ENCODE measurements at regions of chr3 and their contacts with region 1.

Region 1: DNA sequence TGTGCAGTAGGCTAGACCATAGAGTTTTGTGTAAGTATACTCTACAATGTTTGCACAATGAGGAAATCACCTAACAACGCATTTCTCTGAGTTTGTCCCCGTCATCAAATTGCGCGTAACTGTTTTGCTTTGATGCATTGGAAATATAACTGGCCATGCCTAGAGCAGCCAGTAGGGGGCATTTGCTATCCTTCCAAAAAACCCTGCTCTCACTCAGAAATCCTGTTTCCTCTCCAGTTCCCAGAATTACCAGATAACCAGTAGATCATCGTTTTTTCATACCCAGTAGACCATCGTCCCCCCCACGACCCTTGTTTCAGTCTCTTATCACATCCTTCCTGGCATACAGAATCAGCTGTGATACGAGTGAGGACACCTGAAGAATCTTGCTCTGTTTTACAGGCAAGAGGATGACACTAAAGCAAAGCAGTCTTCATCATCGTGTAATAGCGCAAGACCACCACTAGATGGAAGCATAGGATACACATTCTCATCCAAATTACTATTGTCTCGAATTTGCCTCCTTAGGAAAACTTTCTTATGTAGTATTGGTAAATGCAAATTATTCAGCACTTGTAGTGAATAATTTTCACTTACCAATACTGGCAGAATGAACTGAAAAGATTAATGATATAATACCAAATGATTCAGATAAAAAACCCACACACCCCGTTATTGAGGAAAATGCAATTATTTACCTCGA is 4.4 kb upstream of the GABRR3 start:
- DNase-seq: peak; percentile 80
- H3K4me3 ChIP-seq: peak overlapping the region; percentile 47 to 52 (median 50)
- H3K27ac ChIP-seq: no peak overlapping the region
- H3K4me1 ChIP-seq: peaks cover 6% of the 10 kb centered on the region
- H3K27me3 ChIP-seq: no peaks in the 10 kb centered on the region
- CTCF ChIP-seq: peak; percentile 74 to 82

Region 2: GRCh38 chr3:98329392-98330124 is 290.1 kb after region 1 on chr3:
- CTCF ChIA-PET with region 1: no interaction called
- dilution Hi-C with region 1: no loop called
- in situ Hi-C with region 1: loop called (anchors 5 to 10 kb)
- intact Hi-C with region 1: loop called (anchors 1 kb)
- DNase-seq: peak; percentile 38
- H3K4me3 ChIP-seq: no peak overlapping the region
- H3K27ac ChIP-seq: no peak overlapping the region
- H3K4me1 ChIP-seq: no peaks in the 10 kb centered on the region
- H3K27me3 ChIP-seq: no peaks in the 10 kb centered on the region
- CTCF ChIP-seq: peak; percentile 69 to 83

Region 3: DNA sequence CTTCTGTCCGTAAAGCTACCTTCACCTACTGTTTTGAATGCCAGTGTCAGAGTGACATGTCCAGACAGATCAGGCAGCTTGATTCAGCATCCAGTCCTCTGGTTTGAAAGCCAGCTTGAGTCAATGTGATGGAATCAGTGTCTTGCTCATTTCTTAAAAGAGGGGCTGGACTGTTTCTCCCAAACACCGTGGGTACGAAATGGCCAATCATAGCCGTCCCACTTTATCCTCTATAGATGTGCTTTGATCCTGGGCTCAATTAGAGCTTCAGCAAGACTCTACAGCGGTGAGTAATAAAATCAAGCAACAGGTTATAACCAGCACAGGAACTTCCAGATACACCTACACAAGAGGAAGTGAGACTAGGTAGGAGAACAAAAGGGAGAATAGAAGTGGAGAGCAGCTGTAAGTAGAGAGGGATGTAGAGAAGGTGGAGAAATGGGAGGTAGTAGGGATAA is 406.5 kb after region 1 on chr3:
- CTCF ChIA-PET with region 1: no interaction called
- dilution Hi-C with region 1: no loop called
- in situ Hi-C with region 1: no loop called
- intact Hi-C with region 1: loop called (anchors 5 kb)
- DNase-seq: peak; percentile 99
- H3K4me3 ChIP-seq: peak overlapping the region; percentile 7 to 45 (median 22)
- H3K27ac ChIP-seq: peak overlapping the region; percentile 67
- H3K4me1 ChIP-seq: peaks cover 18% of the 10 kb centered on the region
- H3K27me3 ChIP-seq: no peaks in the 10 kb centered on the region
- CTCF ChIP-seq: no peak

Region 4: GRCh38 chr3:98573181-98573728 is 533.8 kb after region 1 on chr3:
- CTCF ChIA-PET with region 1: no interaction called
- dilution Hi-C with region 1: no loop called
- in situ Hi-C with region 1: loop called (anchors 25 kb)
- intact Hi-C with region 1: loop called (anchors 1 kb)
- DNase-seq: peak; percentile 19
- H3K4me3 ChIP-seq: no peak overlapping the region
- H3K27ac ChIP-seq: no peak overlapping the region
- H3K4me1 ChIP-seq: peaks cover 15% of the 10 kb centered on the region
- H3K27me3 ChIP-seq: no peaks in the 10 kb centered on the region
- CTCF ChIP-seq: peak; percentile 44 to 59

Region 5: GRCh38 chr3:98801043-98801747 is 761.7 kb after region 1 on chr3:
- CTCF ChIA-PET with region 1: no interaction called
- dilution Hi-C with region 1: no loop called
- in situ Hi-C with region 1: loop called in 1 of 2 experiments (anchors 25 kb)
- intact Hi-C with region 1: loop called (anchors 5 kb)
- DNase-seq: no peak
- H3K4me3 ChIP-seq: no peak overlapping the region
- H3K27ac ChIP-seq: no peak overlapping the region
- H3K4me1 ChIP-seq: peaks cover 30% of the 10 kb centered on the region
- H3K27me3 ChIP-seq: no peaks in the 10 kb centered on the region
- CTCF ChIP-seq: peak; percentile 10 to 21

Region 6: DNA sequence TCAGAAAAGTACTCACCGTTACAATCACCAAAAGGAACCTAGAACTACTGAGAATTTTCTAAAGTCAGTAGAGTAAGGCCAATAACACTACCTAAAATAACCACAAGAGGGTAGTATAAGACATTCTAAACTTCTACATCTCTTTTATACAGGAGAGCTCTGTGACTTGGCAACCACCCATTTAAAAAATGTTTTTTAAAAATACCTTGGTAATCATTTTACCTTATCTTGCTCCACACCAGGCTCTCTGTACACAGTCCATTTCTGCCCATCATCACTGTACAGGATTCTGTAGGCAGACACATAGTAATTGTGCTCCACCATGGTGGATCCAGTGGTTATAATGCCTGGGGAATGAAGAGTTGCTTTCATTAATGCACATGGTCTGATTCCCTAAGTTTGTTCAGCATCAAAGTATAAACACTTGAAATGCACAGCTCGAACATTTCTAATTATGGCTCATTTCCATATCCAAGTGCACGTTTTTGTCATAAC is 778.1 kb after region 1 on chr3:
- CTCF ChIA-PET with region 1: no interaction called
- dilution Hi-C with region 1: no loop called
- in situ Hi-C with region 1: loop called in 1 of 2 experiments (anchors 25 kb)
- intact Hi-C with region 1: no loop called
- DNase-seq: no peak
- H3K4me3 ChIP-seq: no peak overlapping the region
- H3K27ac ChIP-seq: no peak overlapping the region
- H3K4me1 ChIP-seq: peaks cover 3% of the 10 kb centered on the region
- H3K27me3 ChIP-seq: no peaks in the 10 kb centered on the region
- CTCF ChIP-seq: peak; percentile 57 to 69

Measured in mammary epithelial cell (primary cell).